ENCODE measurements at regions of chr1 and their contacts with region 1.

Region 1: DNA sequence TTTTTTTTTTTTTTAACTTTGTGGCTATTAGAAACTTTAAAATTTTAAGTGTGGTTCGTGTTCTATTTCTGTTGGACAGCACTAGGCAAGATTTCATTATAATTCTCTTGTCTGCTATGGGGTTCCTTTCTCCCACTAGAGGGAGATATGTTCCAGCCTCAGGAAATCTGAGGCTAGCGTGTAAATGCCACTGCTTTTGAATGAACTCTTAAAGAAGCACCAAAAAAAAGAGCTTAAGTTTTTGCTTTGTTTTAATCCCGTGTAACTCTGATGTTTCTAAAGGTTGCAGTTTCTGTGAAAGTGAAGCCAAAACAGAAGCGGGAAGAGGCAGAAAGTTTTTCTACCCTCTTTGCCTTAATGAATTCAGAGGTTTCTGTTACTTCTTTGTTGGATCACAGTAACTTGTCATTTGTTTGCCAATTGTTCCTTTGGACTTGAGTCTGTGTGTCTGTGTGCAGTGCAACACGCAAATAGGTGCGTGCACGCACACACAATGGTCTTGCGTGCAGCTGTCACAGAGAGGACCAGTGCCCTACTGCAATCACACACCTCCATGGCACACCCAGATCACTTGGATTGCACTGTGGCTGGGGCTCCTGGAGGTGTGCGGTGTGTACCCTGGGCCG is 32.3 kb downstream of the HHAT start:
- DNase-seq: no peak
- H3K4me3 Mint-ChIP-seq: no peak overlapping the region
- H3K27ac Mint-ChIP-seq: no peak overlapping the region
- H3K4me1 Mint-ChIP-seq: peaks cover 10% of the 10 kb centered on the region
- H3K27me3 Mint-ChIP-seq: no peaks in the 10 kb centered on the region

Region 2: GRCh38 chr1:209219791-209220524 is 1141.0 kb before region 1 on chr1:
- CTCF ChIA-PET with region 1: no interaction called
- POLR2A ChIA-PET with region 1: no interaction called
- intact Hi-C with region 1: no loop called
- DNase-seq: no peak
- H3K4me3 Mint-ChIP-seq: no peak overlapping the region
- H3K27ac Mint-ChIP-seq: no peak overlapping the region
- H3K4me1 Mint-ChIP-seq: no peaks in the 10 kb centered on the region
- H3K27me3 Mint-ChIP-seq: peaks cover 8% of the 10 kb centered on the region

Region 3: DNA sequence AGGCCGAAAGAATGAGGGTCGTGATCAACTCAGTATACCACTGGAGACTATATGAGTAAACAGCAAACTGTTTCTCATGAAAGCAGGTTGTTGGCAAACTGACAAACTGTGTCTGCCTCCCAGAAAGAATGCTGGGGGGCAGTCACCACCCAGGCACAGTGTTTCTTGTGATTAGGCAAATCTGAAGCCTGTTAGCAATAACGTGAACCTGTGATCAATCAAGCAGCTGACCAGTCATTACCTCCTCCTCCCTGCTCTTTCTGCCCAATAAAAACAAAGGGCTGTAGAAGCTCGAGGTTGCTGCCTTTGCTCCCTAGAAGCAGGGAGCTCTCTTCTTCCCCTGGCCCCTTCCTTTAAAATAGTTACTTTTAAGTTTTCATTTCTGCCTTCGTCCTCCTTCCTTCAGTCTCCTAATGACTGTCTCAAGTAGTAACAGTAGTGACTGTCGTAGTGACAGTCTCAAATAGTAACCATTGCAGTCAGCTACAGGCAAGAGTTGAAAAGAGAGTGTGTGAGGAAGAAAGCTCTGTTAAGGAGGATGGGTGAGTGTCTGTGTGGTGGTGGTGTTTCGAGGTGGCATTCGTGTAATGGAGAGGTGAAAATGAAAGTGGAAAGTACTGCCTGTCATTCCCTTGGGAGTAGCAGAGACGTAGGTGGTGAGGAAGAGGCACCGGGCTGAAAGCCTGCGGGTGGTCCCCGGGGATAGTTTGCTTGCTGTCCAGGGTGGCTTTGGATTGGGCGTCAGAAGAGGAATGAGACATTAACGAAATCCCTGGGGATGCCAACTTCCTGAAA is 17.8 kb before region 1 on chr1:
- CTCF ChIA-PET with region 1: interaction called, 24 read pairs
- POLR2A ChIA-PET with region 1: no interaction called
- intact Hi-C with region 1: loop called (anchors 2 kb)
- DNase-seq: no peak
- H3K4me3 Mint-ChIP-seq: no peak overlapping the region
- H3K27ac Mint-ChIP-seq: no peak overlapping the region
- H3K4me1 Mint-ChIP-seq: peaks cover 36% of the 10 kb centered on the region
- H3K27me3 Mint-ChIP-seq: no peaks in the 10 kb centered on the region